ENCODE measurements at regions of chr2 and their contacts with region 1.

Region 1: DNA sequence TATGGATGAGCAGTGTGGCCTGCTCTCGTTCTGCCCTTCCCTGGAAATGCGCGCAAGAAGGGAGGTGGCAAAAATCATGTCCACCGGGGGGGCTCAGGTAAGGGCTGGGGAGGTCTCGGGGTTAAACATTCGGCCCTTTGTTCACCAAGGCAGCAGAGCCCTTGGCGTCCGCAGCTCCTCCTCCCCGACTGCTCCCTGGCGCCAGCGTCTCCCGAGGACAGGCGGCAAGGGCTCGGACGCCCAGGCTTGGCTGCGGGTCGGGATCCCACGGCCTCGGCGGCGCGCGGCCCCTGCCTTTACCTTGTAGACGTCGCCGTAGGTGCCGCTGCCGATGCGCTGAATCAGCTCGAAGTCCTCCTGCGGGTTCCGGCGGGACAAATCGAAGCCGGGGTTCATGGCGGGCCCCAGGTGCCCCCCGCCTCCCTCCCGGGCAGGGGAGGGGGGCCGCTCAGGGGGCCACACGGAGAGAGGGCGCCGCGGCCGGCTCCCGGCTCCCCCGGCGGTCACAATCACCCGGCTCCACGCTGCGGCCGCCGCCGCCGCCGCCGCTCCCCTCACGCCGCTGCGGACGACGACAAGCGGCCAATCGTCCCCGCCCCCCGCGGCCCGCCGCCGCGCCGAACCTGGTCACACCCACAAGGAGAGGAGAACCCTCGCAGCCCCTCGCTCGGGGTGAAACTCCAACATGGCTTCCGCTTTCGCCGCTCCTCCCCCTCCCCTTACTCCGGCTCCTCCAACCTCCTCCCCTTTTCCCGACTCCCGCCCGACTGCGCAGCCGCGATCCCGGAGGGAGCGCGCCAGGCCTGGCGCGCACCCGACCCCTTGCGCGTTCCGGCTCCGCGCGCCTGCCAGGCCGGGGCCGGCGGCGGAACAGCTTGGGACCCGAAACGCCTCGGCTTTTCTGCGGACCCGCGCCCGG is at the start of gene MAP4K3:
- DNase-seq: peak; percentile 95
- H3K4me3 Mint-ChIP-seq: peak within 1 kb of the TSS; percentile 72
- H3K27ac Mint-ChIP-seq: peak within 1 kb of the TSS; percentile 97
- H3K4me1 Mint-ChIP-seq: peaks cover 32% of the 10 kb centered on the region
- H3K27me3 Mint-ChIP-seq: no peaks in the 10 kb centered on the region
- CTCF ChIP-seq: no peak
- total RNA-seq, gene MAP4K3: 30.2 and 36.0 TPM in 2 replicates

Region 2: DNA sequence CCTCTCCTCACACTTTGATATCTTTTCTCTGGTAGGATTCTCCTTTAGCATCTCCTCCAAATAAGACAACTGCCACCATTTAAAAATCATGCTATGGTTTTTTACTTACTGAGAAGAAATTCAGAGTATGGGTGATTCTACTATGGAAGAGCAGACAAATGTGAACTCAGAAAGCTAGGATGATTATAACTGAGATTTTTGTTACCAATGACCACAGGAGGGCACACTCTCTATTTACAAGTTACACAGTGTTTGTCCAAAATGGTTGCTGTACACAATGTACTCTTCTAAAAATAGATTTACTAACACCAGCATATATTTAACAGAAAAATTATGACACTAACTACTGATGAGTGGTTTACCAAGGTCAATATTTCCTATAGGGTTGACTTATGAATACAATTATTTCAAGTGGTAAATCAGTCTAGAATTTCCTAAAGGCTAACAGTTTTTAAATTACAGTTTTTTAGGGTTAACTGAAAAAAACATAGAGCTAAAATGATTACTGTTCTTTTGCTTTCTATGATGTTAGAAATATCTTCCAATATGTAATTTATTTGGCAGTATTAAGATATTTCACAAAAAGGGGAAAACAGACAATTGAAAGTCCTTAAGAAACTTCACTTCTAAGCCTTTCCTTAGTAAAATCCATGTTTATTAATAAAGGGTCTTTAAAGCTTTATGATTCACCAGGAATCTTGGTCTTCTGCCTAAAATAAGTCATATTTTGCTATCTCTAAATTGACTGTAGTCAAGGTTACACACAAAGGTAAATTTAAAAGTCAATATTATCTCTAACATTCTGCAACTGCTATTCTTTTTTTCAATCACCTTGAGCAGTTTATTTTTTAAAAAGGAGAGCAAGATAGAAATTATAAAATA is 57.0 kb before region 1 on chr2:
- CTCF ChIA-PET with region 1: interaction called, 7 read pairs
- POLR2A ChIA-PET with region 1: interaction called, 198 read pairs
- intact Hi-C with region 1: loop called (anchors 1 kb)
- DNase-seq: peak; percentile 62
- H3K4me3 Mint-ChIP-seq: no peak overlapping the region
- H3K27ac Mint-ChIP-seq: peak overlapping the region; percentile 82
- H3K4me1 Mint-ChIP-seq: peaks cover 25% of the 10 kb centered on the region
- H3K27me3 Mint-ChIP-seq: no peaks in the 10 kb centered on the region
- CTCF ChIP-seq: peak; percentile 48

Region 3: DNA sequence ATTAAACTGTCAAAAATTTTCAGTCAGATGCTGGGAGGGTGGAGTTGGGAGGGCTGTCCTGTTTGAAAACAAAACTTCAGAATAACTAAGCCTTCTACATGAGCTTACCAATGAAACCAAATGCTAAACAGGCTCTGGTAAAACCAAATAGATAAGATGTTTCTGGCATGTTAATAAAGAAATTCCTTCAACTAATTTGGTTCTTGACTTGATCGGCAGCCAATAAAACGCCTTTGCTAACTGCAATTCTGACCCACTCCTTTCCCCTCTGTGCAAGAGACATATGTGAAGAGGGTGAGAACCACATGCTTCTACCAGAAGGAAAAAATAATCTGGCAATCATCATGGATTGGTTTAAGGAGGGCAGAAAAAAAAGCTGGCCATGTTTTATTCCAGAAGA is 20.7 kb before region 1 on chr2:
- CTCF ChIA-PET with region 1: interaction called, 3 read pairs
- POLR2A ChIA-PET with region 1: interaction called, 21 read pairs
- intact Hi-C with region 1: no loop called
- DNase-seq: no peak
- H3K4me3 Mint-ChIP-seq: no peak overlapping the region
- H3K27ac Mint-ChIP-seq: no peak overlapping the region
- H3K4me1 Mint-ChIP-seq: peaks cover 23% of the 10 kb centered on the region
- H3K27me3 Mint-ChIP-seq: no peaks in the 10 kb centered on the region
- CTCF ChIP-seq: no peak

Region 4: GRCh38 chr2:39469807-39470206 is 33.0 kb after region 1 on chr2:
- CTCF ChIA-PET with region 1: interaction called, 4 read pairs
- POLR2A ChIA-PET with region 1: interaction called, 41 read pairs
- intact Hi-C with region 1: no loop called
- DNase-seq: peak; percentile 40
- H3K4me3 Mint-ChIP-seq: peak overlapping the region; percentile 35
- H3K27ac Mint-ChIP-seq: peak overlapping the region; percentile 49
- H3K4me1 Mint-ChIP-seq: peaks cover 34% of the 10 kb centered on the region
- H3K27me3 Mint-ChIP-seq: no peaks in the 10 kb centered on the region
- CTCF ChIP-seq: no peak

Region 5: DNA sequence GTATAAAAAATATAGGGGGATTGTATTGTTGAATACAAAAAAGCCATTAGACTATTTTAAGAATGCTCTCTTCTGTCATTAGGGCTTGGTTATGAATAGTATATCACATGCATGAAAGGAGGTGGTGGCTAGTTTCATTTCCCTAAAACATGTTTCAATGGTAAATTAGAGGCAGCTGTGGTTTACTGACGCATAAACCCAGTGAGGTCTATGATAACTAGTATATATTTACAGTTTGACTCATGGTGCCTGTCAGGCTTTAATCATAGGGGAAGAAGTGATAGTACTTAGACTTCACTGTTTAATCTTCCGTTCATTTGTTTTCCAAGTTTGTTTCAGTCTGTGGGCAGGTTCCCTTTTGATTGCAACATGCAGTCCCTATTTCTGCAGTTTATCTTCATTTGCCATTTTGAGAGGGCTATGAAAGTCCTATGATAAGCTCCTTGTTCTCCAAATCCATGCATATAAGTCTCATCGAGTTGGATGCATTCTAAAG is 55.3 kb after region 1 on chr2:
- CTCF ChIA-PET with region 1: no interaction called
- POLR2A ChIA-PET with region 1: interaction called, 22 read pairs
- intact Hi-C with region 1: loop called (anchors 5 kb)
- DNase-seq: peak; percentile 74
- H3K4me3 Mint-ChIP-seq: no peak overlapping the region
- H3K27ac Mint-ChIP-seq: no peak overlapping the region
- H3K4me1 Mint-ChIP-seq: peaks cover 14% of the 10 kb centered on the region
- H3K27me3 Mint-ChIP-seq: no peaks in the 10 kb centered on the region
- CTCF ChIP-seq: no peak

Region 6: GRCh38 chr2:39523308-39524044 is 86.6 kb after region 1 on chr2:
- CTCF ChIA-PET with region 1: interaction called, 4 read pairs
- POLR2A ChIA-PET with region 1: interaction called, 28 read pairs
- intact Hi-C with region 1: no loop called
- DNase-seq: peak; percentile 82
- H3K4me3 Mint-ChIP-seq: peak overlapping the region; percentile 59
- H3K27ac Mint-ChIP-seq: peak overlapping the region; percentile 96
- H3K4me1 Mint-ChIP-seq: peaks cover 49% of the 10 kb centered on the region
- H3K27me3 Mint-ChIP-seq: no peaks in the 10 kb centered on the region
- CTCF ChIP-seq: no peak

Region 7: DNA sequence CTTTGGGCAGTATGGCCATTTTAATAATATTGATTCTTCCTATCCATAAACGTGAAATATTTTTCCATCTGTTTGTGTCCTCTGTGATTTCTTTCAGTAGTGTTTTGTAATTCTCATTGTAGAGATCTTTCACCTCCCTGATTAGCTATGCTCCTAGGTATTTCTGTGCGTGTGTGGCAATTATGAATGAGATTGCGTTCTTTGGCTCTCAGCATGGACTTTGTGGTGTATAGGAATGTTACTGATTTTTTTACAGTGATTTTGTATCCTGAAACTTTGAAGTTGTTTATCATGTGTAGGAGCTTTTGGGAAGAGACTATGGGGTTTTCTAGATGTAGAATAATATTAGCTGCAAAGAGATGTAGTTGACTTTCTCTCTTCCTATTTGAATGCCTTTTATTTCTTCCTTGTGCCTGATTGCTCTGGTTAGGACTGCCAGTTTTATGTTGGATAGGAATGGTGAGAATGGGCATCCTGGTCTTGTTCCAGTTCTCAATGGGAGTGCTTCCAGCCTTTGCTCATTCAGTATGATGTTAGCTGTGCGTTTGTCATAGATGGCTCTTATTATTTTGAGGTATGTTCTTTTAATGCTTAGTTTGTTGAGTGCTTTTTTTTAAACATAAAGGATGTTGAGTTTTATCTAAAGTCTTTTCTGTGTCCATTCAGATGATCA is 369.2 kb after region 1 on chr2:
- CTCF ChIA-PET with region 1: no interaction called
- POLR2A ChIA-PET with region 1: no interaction called
- intact Hi-C with region 1: no loop called
- DNase-seq: no peak
- H3K4me3 Mint-ChIP-seq: no peak overlapping the region
- H3K27ac Mint-ChIP-seq: no peak overlapping the region
- H3K4me1 Mint-ChIP-seq: peaks cover 5% of the 10 kb centered on the region
- H3K27me3 Mint-ChIP-seq: no peaks in the 10 kb centered on the region
- CTCF ChIP-seq: no peak

Measured in MCF 10A (cell line).